Activated T-helper 1 cell treated with anti-CD3 and anti-CD28 coated beads, Interleukin-12 subunit alpha, Interleukin-12 subunit beta, Interleukin-2, Interleukin-4 antibody, amounts not matched to agents 30 ng/mL and 10 ng/mL and 1 ng/mL, durations not matched to agents 14 hours and 24 hours and 36 hours (primary cell): ENCODE measurements at regions of chr6 and their contacts with region 1.

Region 1: GRCh38 chr6:142474531-142475289 is 172.9 kb downstream of the ADGRG6 start:
- DNase-seq: no peak
- H3K4me3 Mint-ChIP-seq: no peak overlapping the region
- H3K27ac Mint-ChIP-seq: no peak overlapping the region
- H3K4me1 Mint-ChIP-seq: peaks cover 7% of the 10 kb centered on the region
- H3K27me3 Mint-ChIP-seq: peaks cover 7% of the 10 kb centered on the region

Region 2: DNA sequence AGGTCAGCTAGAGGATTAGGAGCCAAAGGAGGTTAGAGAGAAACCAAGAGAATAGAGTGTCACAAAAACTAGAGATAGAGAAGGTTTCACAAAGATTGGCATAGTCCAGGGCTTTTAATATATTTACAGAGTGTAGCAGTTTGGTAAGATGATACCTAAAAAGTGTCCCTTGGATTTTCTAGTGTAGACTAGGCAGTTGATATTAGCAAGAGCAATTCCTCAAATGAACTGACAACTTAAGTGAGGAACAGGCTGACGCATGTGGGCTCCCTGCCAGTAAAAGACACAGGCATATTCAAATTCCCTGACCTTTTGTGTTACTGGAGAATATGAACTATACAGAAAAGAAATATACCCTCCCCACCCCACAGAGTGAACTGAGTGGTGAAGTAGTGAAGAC is 287.5 kb before region 1 on chr6:
- intact Hi-C with region 1: no loop called
- DNase-seq: no peak
- H3K4me3 Mint-ChIP-seq: no peak overlapping the region
- H3K27ac Mint-ChIP-seq: no peak overlapping the region
- H3K4me1 Mint-ChIP-seq: no peaks in the 10 kb centered on the region
- H3K27me3 Mint-ChIP-seq: no peaks in the 10 kb centered on the region

Region 3: DNA sequence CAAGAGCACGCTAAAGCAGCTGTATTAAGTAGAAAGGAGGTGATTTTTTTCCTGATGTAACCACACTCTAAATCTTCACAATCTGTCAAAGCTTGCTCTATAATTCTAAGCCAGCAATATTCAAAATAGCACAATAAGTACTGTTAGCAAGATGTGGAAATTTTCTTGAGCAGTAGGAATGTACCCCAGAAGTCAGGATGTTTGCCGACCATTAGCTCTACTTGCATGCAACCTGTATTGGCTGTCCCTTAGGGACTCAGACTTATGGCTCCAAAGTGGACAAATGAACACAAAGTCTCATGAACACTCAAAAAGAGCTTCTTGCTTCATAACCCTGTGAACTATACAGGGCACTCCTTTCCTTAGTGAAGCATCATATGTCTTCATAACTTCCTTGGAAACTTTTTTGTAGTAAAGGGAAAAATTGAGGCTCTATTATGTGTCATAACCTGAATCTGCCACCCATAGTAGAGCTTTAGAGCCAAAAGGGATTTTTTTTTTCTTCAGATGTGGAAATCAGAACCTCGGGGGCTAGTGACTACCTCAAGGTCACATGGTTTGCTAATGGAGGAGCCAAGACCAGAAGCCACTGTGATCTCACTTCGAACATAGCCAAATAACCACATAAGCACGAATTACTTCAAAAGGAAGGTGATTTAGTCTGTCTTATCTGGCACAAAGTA is 118.4 kb before region 1 on chr6:
- intact Hi-C with region 1: no loop called
- DNase-seq: no peak
- H3K4me3 Mint-ChIP-seq: no peak overlapping the region
- H3K27ac Mint-ChIP-seq: no peak overlapping the region
- H3K4me1 Mint-ChIP-seq: no peaks in the 10 kb centered on the region
- H3K27me3 Mint-ChIP-seq: no peaks in the 10 kb centered on the region

Region 4: DNA sequence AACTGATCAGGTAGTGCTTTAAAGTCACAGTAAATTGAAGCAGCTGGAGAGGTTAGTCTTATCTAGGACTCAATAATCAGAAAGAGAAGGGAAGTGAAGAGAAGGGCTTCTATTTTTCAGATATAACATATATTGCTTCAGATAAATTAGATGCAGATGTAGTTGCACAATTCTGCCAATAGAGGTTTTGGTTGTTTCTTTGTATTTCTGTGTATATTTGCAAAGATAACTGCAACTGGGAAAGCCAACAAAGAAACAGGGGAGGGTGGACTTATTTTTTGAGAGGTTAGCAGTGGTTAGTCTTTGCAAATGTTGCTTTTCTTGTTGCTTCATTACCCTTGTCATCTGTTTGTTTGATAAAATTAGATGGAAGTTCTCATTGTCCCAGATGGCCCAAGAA is 66.3 kb before region 1 on chr6:
- intact Hi-C with region 1: no loop called
- DNase-seq: no peak
- H3K4me3 Mint-ChIP-seq: no peak overlapping the region
- H3K27ac Mint-ChIP-seq: no peak overlapping the region
- H3K4me1 Mint-ChIP-seq: peaks cover 8% of the 10 kb centered on the region
- H3K27me3 Mint-ChIP-seq: peaks cover 22% of the 10 kb centered on the region

Region 5: DNA sequence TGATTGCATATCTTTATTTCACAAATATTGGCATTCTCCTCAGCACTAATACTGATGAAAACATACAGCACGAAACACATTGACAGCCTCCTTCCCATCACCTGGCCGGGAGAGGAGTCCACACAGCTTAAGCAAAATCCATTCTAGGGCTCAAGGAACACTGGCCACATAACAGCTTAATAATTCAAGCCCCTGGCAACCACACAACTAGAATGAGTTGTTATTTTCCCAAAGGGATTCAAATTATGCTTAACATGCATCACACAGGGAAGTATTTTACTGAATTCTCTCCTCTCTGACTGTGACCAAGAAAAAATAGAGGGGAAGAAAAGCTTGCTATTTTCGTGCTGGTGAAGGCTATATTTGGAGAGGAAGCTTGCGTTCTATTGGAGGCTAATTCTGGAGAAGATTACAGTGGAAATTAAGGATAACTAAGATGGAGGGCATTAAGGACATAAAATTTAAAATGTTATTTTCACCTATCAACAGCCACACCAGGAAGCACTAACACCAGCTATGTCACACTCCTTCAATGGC is 25.6 kb after region 1 on chr6:
- intact Hi-C with region 1: no loop called
- DNase-seq: no peak
- H3K4me3 Mint-ChIP-seq: no peak overlapping the region
- H3K27ac Mint-ChIP-seq: no peak overlapping the region
- H3K4me1 Mint-ChIP-seq: no peaks in the 10 kb centered on the region
- H3K27me3 Mint-ChIP-seq: no peaks in the 10 kb centered on the region

Region 6: DNA sequence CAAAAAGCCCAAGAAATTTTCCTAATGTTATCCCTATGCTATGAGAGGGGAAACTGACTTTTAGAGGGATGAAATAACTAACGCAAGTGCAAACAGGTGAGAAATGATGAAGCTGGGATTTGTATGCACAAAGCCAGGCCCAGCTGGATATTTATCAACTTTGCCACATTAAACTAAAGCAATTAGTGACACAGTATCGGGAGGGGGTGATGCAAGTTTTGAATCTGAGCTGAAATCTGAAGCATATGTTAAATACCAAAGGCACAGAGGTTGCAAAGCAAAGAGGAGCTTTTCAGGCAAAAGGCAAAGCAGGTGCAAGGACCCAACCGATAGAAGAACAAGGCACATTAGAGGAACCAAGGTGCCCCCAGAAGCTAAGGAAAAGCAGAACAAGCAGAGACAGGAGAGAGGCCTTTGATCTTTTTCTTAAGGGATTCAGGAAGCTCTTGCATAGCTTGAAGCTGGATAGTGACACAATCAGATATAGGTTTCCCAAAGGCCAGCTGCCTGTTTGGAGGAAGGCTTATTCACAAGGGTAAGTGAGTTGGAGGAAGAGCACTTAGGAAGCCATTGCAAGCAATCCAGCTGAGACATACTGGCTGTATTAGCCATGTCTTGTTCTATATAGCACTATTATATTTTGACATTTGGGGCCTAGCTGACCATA is 262.8 kb after region 1 on chr6:
- intact Hi-C with region 1: loop called (anchors 10 kb)
- DNase-seq: no peak
- H3K4me3 Mint-ChIP-seq: no peak overlapping the region
- H3K27ac Mint-ChIP-seq: no peak overlapping the region
- H3K4me1 Mint-ChIP-seq: no peaks in the 10 kb centered on the region
- H3K27me3 Mint-ChIP-seq: peaks cover 4% of the 10 kb centered on the region

Region 7: DNA sequence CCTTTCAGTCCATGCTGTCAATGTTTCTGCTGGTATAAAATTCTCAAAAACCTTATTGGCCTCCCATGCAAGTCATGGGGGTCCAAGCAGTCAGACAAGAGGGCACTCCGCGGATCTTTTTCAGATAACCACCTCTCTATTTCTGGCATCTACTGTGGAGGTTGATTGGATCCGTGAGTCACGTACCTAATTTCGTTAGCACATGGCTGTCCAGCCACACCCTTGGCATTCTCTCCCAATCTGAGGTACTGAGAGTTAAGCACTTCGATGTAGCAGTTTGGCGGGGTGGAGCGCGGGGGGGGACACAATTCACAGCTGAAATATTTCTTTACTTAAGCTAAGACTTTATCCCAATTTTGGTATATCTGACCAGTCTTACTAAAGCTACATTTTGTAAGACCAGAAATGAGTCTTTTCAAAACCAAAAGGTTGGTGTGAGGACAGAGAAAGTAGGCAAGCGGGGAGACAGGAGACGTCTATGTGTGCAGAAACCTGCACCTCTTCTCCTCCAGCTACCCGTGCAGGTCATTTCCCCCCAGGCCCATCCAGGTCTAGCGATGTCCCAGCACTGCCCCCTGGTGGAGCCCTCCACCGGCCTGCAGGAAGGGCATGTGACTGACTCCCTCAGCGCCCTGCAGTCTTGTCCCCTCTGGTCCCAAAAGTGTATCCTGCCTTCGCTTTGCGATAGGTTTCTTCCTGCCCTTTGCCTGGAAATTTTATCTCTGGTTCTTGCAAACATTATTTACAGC is 862.7 kb after region 1 on chr6:
- intact Hi-C with region 1: loop called (anchors 2 kb)
- DNase-seq: peak; percentile 14
- H3K4me3 Mint-ChIP-seq: no peak overlapping the region
- H3K27ac Mint-ChIP-seq: no peak overlapping the region
- H3K4me1 Mint-ChIP-seq: peaks cover 4% of the 10 kb centered on the region
- H3K27me3 Mint-ChIP-seq: no peaks in the 10 kb centered on the region

Region 8: DNA sequence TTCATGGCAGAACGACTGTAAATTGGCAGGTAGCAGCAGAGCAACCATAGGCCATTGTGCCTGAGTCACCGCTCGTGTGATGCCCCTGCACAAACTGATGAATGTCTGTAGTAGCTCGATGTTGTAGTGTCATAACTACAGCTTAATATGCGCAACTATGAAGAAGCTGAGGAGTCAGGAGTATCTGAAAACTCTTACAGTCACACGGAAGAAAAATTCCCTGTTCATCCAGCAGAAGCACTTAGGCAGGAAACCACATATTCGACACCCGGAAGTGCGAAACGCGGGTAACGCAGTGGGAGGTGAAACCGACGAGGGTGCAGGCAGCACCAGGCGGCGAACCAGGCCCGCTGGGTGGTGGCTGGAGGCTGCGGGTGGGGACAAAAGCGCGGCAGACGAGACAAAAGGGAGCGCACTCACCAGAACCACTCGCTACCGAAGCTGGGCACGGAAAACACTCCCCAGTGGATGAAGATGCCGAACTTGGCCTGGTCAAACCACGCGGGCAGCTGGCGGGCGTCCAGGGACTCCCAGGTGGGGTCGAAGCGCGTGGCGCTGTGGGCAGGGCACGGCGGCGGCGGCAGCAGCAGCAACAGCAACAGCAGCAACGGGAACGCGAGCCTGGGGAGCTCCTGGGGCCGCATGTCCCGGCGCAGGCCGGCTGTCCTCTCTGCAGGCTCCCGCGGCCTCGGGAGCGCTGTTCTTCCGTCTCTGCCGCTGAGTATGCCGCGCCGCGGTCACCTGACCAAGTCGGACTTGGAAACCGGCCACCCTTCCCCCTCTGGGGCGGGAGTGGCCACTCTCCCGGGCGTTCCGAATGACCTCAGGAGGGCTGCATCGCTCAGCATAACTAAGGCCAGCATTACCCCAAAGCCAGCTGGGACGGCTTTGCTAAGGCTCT is 1036.5 kb after region 1 on chr6 and contains the start of gene FUCA2:
- intact Hi-C with region 1: loop called (anchors 10 kb)
- DNase-seq: peak; percentile 64
- H3K4me3 Mint-ChIP-seq: peak within 1 kb of the TSS; percentile 95
- H3K27ac Mint-ChIP-seq: peak within 1 kb of the TSS; percentile 96
- H3K4me1 Mint-ChIP-seq: peaks cover 39% of the 10 kb centered on the region
- H3K27me3 Mint-ChIP-seq: no peaks in the 10 kb centered on the region
- total RNA-seq, gene FUCA2: 15.7 and 16.3 TPM in 2 replicates

Region 9: DNA sequence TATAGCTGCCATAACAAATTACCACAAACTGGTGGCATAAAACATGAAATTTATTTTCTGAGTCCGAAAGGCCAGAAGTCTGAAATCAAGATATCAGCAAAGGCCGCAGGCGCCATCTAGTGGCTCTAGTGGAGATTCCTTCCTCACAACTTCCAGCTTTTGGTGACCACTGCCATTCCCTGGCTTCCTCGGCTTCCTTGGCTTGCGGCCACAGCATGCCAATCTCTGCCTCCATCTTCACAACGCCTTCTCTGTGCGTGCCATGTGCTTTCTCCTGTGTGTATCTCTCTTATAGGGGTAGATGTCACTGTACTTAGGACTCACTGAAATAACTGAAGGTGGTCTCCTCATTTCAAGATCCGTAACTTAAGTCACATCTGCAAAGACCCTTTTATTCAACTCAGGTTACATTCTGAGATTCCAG is 1538.8 kb after region 1 on chr6:
- intact Hi-C with region 1: loop called (anchors 5 kb)
- DNase-seq: peak; percentile 24
- H3K4me3 Mint-ChIP-seq: no peak overlapping the region
- H3K27ac Mint-ChIP-seq: no peak overlapping the region
- H3K4me1 Mint-ChIP-seq: no peaks in the 10 kb centered on the region
- H3K27me3 Mint-ChIP-seq: peaks cover 25% of the 10 kb centered on the region